ENCODE measurements at regions of chr5 and their contacts with region 1.

Region 1: GRCh38 chr5:171419688-171420430 is 412 bp downstream of the FGF18 start:
- DNase-seq: peak in 3 of 4 donors; percentile 26 to 44 (median 33)
- ATAC-seq: peak; percentile 45
- H3K4me3 ChIP-seq: no peak overlapping the region
- H3K27ac ChIP-seq: no peak overlapping the region
- H3K4me1 ChIP-seq: peaks cover 28% of the 10 kb centered on the region
- H3K27me3 ChIP-seq: peaks cover 0 to 6% of the 10 kb centered on the region in 2 donors
- CTCF ChIP-seq: peak in 1 of 7 experiments; percentile 16
- POLR2A ChIP-seq: no peak

Region 2: DNA sequence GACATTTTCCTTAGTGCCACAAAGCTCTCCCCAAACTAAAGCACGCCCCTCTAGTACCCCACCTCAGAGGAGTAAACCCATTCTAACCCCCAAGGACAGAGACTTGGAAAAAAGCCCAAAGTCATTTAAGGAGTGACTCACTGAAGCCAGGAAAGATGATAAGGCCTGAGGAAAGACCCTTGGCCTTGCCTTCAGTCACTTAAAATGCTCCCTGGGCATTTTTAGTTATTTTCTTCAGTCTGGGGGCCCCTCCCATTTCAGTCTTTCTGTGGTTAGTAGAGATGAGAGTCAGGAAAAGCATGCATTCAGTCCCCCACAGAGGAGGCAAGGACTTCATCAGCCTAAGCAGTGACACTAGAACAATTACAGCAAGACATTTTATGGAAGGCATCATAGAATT is 124.6 kb before region 1 on chr5:
- intact Hi-C with region 1: no loop called
- DNase-seq: no peak
- ATAC-seq: no peak
- H3K4me3 ChIP-seq: no peak overlapping the region
- H3K27ac ChIP-seq: no peak overlapping the region
- H3K4me1 ChIP-seq: no peaks in the 10 kb centered on the region
- H3K27me3 ChIP-seq: no peaks in the 10 kb centered on the region
- CTCF ChIP-seq: no peak
- POLR2A ChIP-seq: no peak

Region 3: GRCh38 chr5:171310819-171311697 is 108.8 kb before region 1 on chr5:
- intact Hi-C with region 1: no loop called
- DNase-seq: no peak
- ATAC-seq: no peak
- H3K4me3 ChIP-seq: no peak overlapping the region
- H3K27ac ChIP-seq: no peak overlapping the region
- H3K4me1 ChIP-seq: peaks cover 58% of the 10 kb centered on the region
- H3K27me3 ChIP-seq: peaks cover 5 to 85% of the 10 kb centered on the region in 2 donors
- CTCF ChIP-seq: no peak
- POLR2A ChIP-seq: no peak

Region 4: DNA sequence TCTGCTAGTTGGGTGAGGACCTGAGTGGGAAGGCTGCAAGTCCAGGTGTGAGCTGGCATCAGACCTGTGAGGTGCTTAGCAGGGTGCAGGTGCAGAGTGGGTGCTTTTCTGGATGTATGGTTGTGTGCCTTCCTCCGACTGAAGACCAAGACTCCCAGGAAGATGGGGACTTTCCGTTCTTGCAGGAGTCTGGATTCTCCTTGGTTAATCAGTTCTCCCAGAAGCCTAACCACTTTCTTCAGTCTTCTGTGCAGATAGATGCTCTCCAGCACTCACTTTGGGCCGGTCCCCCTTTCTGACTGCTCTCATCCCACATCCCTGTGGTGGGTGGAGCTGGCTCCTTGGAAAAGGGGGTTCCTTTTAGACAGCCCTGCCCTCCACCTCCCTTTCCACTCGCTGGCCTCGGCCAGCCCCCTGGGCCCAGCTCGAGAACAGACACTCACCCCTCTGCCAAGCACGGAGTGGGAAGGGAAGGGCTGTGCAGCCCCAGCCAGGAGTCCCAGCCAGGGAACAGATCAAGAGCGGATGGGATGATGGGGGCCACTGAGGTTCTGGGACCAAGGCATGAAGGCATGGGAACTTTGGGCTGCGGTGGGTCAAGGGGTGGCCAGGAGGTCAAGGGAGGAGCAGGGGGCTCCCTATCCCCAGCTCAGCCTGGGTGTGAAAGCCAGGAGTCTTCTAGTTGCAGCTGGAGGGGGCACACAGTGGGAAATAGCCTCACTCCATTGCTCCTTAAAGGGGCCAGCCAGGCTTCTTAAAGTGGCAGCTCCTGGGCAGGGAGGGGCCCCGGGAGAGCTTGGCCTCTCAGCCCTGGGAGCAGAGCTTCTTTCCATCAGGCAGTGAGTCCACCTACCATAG is 61.9 kb after region 1 on chr5:
- intact Hi-C with region 1: no loop called
- DNase-seq: no peak
- ATAC-seq: no peak
- H3K4me3 ChIP-seq: no peak overlapping the region
- H3K27ac ChIP-seq: no peak overlapping the region
- H3K4me1 ChIP-seq: no peaks in the 10 kb centered on the region
- H3K27me3 ChIP-seq: no peaks in the 10 kb centered on the region
- CTCF ChIP-seq: no peak
- POLR2A ChIP-seq: no peak

Region 5: GRCh38 chr5:171893290-171893886 is 473.5 kb after region 1 on chr5:
- intact Hi-C with region 1: loop called (anchors 10 kb)
- DNase-seq: no peak
- ATAC-seq: no peak
- H3K4me3 ChIP-seq: no peak overlapping the region
- H3K27ac ChIP-seq: no peak overlapping the region
- H3K4me1 ChIP-seq: peaks cover 20% of the 10 kb centered on the region
- H3K27me3 ChIP-seq: no peaks in the 10 kb centered on the region
- CTCF ChIP-seq: no peak
- POLR2A ChIP-seq: no peak

Region 6: DNA sequence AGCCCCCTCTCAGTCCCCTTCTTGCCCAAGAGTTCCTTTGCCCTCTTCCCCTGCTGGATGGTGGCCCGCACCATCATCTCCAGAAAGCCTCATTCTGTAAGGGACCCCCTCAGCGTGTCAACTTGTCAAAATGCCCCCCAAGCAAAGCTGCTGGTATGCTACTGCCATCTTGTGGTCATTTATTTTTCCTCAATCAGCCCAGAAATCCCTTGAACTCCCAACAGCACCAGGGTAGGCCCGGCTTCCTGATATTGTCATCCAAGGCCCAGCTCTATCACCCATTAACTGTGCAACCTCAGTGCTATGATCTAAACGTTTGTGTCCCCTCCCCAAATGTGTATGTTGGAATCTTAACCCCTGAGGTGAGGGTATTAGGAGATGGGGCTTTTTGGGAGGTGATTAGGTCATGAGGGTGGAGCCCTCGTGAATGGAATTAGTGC is 639.8 kb after region 1 on chr5:
- intact Hi-C with region 1: loop called (anchors 10 kb)
- DNase-seq: no peak
- ATAC-seq: no peak
- H3K4me3 ChIP-seq: no peak overlapping the region
- H3K27ac ChIP-seq: no peak overlapping the region
- H3K4me1 ChIP-seq: no peaks in the 10 kb centered on the region
- H3K27me3 ChIP-seq: no peaks in the 10 kb centered on the region
- CTCF ChIP-seq: peak; percentile 30 to 61 (median 45)
- POLR2A ChIP-seq: no peak

Measured in body of pancreas (tissue), 4 donors.